CD8-positive, alpha-beta T cell (primary cell): ENCODE measurements at regions of chr2 and their contacts with region 1.

Region 1: DNA sequence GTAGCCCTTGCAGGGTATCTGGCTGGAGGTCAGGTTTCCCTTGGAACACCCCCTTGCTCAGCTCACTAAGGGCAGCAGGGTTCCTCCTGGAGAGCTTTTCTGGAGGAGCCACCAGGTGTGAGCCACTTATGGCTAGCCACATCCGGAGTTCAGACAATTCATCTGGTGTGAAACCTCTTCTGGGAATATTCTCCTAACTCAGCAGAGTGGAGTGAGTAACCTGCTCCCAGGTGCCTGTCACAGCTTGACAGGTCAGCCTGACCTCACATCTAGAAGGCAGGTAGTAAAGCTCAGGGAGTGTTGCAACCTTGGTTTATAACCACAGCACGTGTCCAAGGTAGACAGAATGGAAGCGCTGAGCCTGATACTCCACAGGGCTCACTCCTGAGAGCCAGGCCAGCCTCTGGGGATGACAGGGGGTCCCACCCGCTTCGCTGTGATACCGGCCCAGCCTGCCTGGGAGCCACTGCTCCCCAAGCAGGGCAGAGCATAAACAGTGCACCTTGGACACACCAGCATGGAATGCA is 62.6 kb upstream of the TGFA start:
- DNase-seq: no peak
- ATAC-seq: no peak
- H3K4me3 ChIP-seq: no peak overlapping the region
- H3K4me3 Mint-ChIP-seq: no peak overlapping the region
- H3K27ac ChIP-seq: no peak overlapping the region
- H3K27ac Mint-ChIP-seq: no peak overlapping the region
- H3K4me1 ChIP-seq: no peaks in the 10 kb centered on the region
- H3K4me1 Mint-ChIP-seq: no peaks in the 10 kb centered on the region
- H3K27me3 ChIP-seq: no peaks in the 10 kb centered on the region
- H3K27me3 Mint-ChIP-seq: peaks cover 6% of the 10 kb centered on the region
- CTCF ChIP-seq: no peak

Region 2: DNA sequence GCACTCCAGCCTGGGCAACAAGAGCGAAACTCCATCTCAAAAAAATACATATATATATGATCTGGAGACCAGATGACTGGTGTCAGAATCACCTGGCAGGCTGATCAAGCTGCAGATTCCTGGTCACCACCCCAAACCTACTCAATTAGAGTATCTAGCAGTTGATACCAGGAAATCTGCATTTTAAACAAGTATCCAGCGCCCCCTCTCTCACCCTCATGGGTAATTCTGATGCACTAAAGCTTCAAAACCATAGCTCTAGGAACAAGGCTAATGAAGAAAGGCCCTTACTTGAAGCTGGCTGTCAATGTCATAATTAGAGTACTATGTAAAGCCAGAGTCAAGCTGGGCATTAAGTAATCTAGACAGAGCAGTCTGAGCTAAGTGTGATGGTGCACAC is 554.0 kb before region 1 on chr2:
- CTCF ChIA-PET with region 1: no interaction called
- POLR2A ChIA-PET with region 1: no interaction called
- intact Hi-C with region 1: no loop called
- DNase-seq: no peak
- ATAC-seq: no peak
- H3K4me3 ChIP-seq: no peak overlapping the region
- H3K4me3 Mint-ChIP-seq: no peak overlapping the region
- H3K27ac ChIP-seq: no peak overlapping the region
- H3K27ac Mint-ChIP-seq: no peak overlapping the region
- H3K4me1 ChIP-seq: no peaks in the 10 kb centered on the region
- H3K4me1 Mint-ChIP-seq: peaks cover 19% of the 10 kb centered on the region
- H3K27me3 ChIP-seq: no peaks in the 10 kb centered on the region
- H3K27me3 Mint-ChIP-seq: no peaks in the 10 kb centered on the region
- CTCF ChIP-seq: no peak

Region 3: DNA sequence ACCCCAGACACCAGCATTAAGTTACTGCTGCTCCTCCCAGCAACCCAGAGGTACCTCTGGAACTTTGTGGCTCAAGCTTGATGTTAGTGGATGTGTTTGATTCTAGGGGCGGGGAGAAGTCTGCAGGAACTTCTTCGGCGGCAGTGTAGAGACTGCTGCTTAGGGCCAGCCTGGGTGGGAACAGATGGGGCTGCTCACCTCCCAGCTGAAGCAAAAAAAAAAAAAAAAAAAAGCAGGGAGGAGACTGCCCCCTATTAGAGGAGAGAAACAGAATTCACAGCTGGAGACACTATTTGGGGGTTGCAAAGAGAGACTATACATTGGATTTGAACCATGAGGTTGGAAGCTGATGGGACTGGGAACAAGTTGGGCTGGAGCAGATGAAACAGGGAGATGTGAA is 285.8 kb before region 1 on chr2:
- CTCF ChIA-PET with region 1: interaction called, 18 read pairs
- POLR2A ChIA-PET with region 1: no interaction called
- intact Hi-C with region 1: no loop called
- DNase-seq: no peak
- ATAC-seq: no peak
- H3K4me3 ChIP-seq: no peak overlapping the region
- H3K4me3 Mint-ChIP-seq: no peak overlapping the region
- H3K27ac ChIP-seq: no peak overlapping the region
- H3K27ac Mint-ChIP-seq: no peak overlapping the region
- H3K4me1 ChIP-seq: no peaks in the 10 kb centered on the region
- H3K4me1 Mint-ChIP-seq: no peaks in the 10 kb centered on the region
- H3K27me3 ChIP-seq: no peaks in the 10 kb centered on the region
- H3K27me3 Mint-ChIP-seq: no peaks in the 10 kb centered on the region
- CTCF ChIP-seq: no peak

Region 4: DNA sequence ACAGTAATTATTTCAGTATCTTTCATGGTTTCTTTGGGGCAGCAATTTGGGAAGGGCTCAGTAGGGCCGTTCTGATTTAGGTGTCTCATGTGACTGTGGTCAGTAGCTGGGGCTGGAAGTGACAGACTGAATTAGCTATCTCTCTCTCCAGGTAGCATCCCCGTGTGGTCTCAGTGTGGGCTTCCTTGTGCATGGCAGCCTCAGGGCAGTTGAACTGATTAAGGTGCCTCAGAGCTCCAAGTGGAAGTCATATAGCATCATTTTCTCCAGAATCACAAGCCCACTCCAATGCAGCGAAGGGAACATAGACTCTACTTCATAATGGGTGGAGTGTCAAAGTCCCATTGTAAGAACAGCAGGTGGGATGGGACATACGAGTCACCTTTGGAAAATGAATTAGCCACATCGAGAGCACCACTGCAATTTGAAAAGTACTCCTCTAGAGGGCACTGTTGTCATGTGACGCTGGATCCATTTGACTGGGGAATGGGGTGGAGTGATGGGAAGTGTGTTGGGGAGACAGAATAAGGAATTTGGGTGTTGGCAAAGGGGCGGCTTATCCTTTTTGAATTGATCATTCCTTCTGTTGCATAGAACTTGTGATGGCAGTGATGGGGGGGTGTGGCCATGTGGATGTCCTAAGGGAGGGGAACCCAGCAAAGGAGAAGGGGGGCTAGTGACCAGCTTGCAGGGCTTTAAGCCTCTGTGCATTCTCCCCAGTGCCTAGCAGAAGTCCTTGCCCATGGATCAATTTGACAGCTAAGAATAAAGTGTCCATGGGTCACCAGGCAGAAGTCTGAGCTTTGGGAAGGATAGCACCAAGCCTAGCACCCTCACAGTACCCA is 275.1 kb before region 1 on chr2:
- CTCF ChIA-PET with region 1: interaction called, 162 read pairs
- POLR2A ChIA-PET with region 1: interaction called, 4 read pairs
- intact Hi-C with region 1: loop called in 1 of 2 experiments (anchors 1 kb)
- DNase-seq: peak in 7 of 9 experiments; percentile 7 to 62 (median 36)
- ATAC-seq: peak; percentile 51
- H3K4me3 ChIP-seq: no peak overlapping the region
- H3K4me3 Mint-ChIP-seq: no peak overlapping the region
- H3K27ac ChIP-seq: no peak overlapping the region
- H3K27ac Mint-ChIP-seq: no peak overlapping the region
- H3K4me1 ChIP-seq: no peaks in the 10 kb centered on the region
- H3K4me1 Mint-ChIP-seq: no peaks in the 10 kb centered on the region
- H3K27me3 ChIP-seq: no peaks in the 10 kb centered on the region
- H3K27me3 Mint-ChIP-seq: peaks cover 8% of the 10 kb centered on the region
- CTCF ChIP-seq: peak; percentile 94

Region 5: GRCh38 chr2:70553584-70554337 is 62.5 kb before region 1 on chr2 and contains the start of gene TGFA:
- CTCF ChIA-PET with region 1: interaction called, 8 read pairs
- POLR2A ChIA-PET with region 1: no interaction called
- intact Hi-C with region 1: loop called (anchors 2 kb)
- DNase-seq: peak; percentile 28 to 85 (median 67)
- ATAC-seq: peak; percentile 71
- H3K4me3 ChIP-seq: peak within 1 kb of the TSS; percentile 56 to 72
- H3K4me3 Mint-ChIP-seq: peak within 1 kb of the TSS; percentile 92
- H3K27ac ChIP-seq: no peak within 1 kb of the TSS
- H3K27ac Mint-ChIP-seq: peak within 1 kb of the TSS; percentile 86
- H3K4me1 ChIP-seq: peaks cover 21% of the 10 kb centered on the region
- H3K4me1 Mint-ChIP-seq: peaks cover 29% of the 10 kb centered on the region
- H3K27me3 ChIP-seq: no peaks in the 10 kb centered on the region
- H3K27me3 Mint-ChIP-seq: peaks cover 4% of the 10 kb centered on the region
- CTCF ChIP-seq: peak; percentile 81
- total RNA-seq, gene TGFA: 0.58 to 1.0 TPM

Region 6: GRCh38 chr2:70627211-70627902 is 11.1 kb after region 1 on chr2:
- CTCF ChIA-PET with region 1: interaction called, 20 read pairs
- POLR2A ChIA-PET with region 1: no interaction called
- intact Hi-C with region 1: no loop called
- DNase-seq: no peak
- ATAC-seq: no peak
- H3K4me3 ChIP-seq: no peak overlapping the region
- H3K4me3 Mint-ChIP-seq: no peak overlapping the region
- H3K27ac ChIP-seq: no peak overlapping the region
- H3K27ac Mint-ChIP-seq: no peak overlapping the region
- H3K4me1 ChIP-seq: no peaks in the 10 kb centered on the region
- H3K4me1 Mint-ChIP-seq: no peaks in the 10 kb centered on the region
- H3K27me3 ChIP-seq: peaks cover 0 to 3% of the 10 kb centered on the region in 2 experiments
- H3K27me3 Mint-ChIP-seq: peaks cover 18% of the 10 kb centered on the region
- CTCF ChIP-seq: no peak

Region 7: GRCh38 chr2:70641263-70641784 is 25.1 kb after region 1 on chr2:
- CTCF ChIA-PET with region 1: interaction called, 45 read pairs
- POLR2A ChIA-PET with region 1: no interaction called
- intact Hi-C with region 1: no loop called
- DNase-seq: no peak
- ATAC-seq: no peak
- H3K4me3 ChIP-seq: no peak overlapping the region
- H3K4me3 Mint-ChIP-seq: no peak overlapping the region
- H3K27ac ChIP-seq: no peak overlapping the region
- H3K27ac Mint-ChIP-seq: no peak overlapping the region
- H3K4me1 ChIP-seq: peaks cover 21% of the 10 kb centered on the region
- H3K4me1 Mint-ChIP-seq: peaks cover 29% of the 10 kb centered on the region
- H3K27me3 ChIP-seq: no peaks in the 10 kb centered on the region
- H3K27me3 Mint-ChIP-seq: no peaks in the 10 kb centered on the region
- CTCF ChIP-seq: no peak

Region 8: GRCh38 chr2:70647873-70648481 is 31.7 kb after region 1 on chr2:
- CTCF ChIA-PET with region 1: interaction called, 45 read pairs
- POLR2A ChIA-PET with region 1: no interaction called
- intact Hi-C with region 1: loop called in 1 of 2 experiments (anchors 2 kb)
- DNase-seq: peak; percentile 55 to 83 (median 72)
- ATAC-seq: peak; percentile 96
- H3K4me3 ChIP-seq: no peak overlapping the region
- H3K4me3 Mint-ChIP-seq: no peak overlapping the region
- H3K27ac ChIP-seq: no peak overlapping the region
- H3K27ac Mint-ChIP-seq: no peak overlapping the region
- H3K4me1 ChIP-seq: no peaks in the 10 kb centered on the region
- H3K4me1 Mint-ChIP-seq: no peaks in the 10 kb centered on the region
- H3K27me3 ChIP-seq: no peaks in the 10 kb centered on the region
- H3K27me3 Mint-ChIP-seq: peaks cover 6% of the 10 kb centered on the region
- CTCF ChIP-seq: peak; percentile 94